Vagina (tissue), 2 donors: ENCODE measurements at regions of chr6 and their contacts with region 1.

Region 1: GRCh38 chr6:56370561-56371211 is 123.3 kb upstream of the COL21A1 start:
- DNase-seq: no peak
- H3K4me3 ChIP-seq: peak overlapping the region in 1 of 2 donors; percentile 9
- H3K27ac ChIP-seq: peak overlapping the region; percentile 75
- H3K4me1 ChIP-seq: peaks cover 52% of the 10 kb centered on the region
- H3K27me3 ChIP-seq: no peaks in the 10 kb centered on the region
- CTCF ChIP-seq: no peak
- POLR2A ChIP-seq: no peak

Region 2: GRCh38 chr6:55694148-55694547 is 676.5 kb before region 1 on chr6:
- intact Hi-C with region 1: no loop called
- DNase-seq: no peak
- H3K4me3 ChIP-seq: no peak overlapping the region
- H3K27ac ChIP-seq: no peak overlapping the region
- H3K4me1 ChIP-seq: no peaks in the 10 kb centered on the region
- H3K27me3 ChIP-seq: no peaks in the 10 kb centered on the region
- CTCF ChIP-seq: no peak
- POLR2A ChIP-seq: no peak

Region 3: GRCh38 chr6:56451165-56451739 is 80.6 kb after region 1 on chr6:
- intact Hi-C with region 1: no loop called
- DNase-seq: no peak
- H3K4me3 ChIP-seq: no peak overlapping the region
- H3K27ac ChIP-seq: no peak overlapping the region
- H3K4me1 ChIP-seq: no peaks in the 10 kb centered on the region
- H3K27me3 ChIP-seq: no peaks in the 10 kb centered on the region
- CTCF ChIP-seq: no peak
- POLR2A ChIP-seq: no peak

Region 4: GRCh38 chr6:56549014-56549413 is 178.3 kb after region 1 on chr6:
- intact Hi-C with region 1: loop called (anchors 5 kb)
- DNase-seq: no peak
- H3K4me3 ChIP-seq: no peak overlapping the region
- H3K27ac ChIP-seq: peak overlapping the region; percentile 71
- H3K4me1 ChIP-seq: peaks cover 40% of the 10 kb centered on the region
- H3K27me3 ChIP-seq: no peaks in the 10 kb centered on the region
- CTCF ChIP-seq: peak in 2 of 3 experiments; percentile 47 to 48
- POLR2A ChIP-seq: no peak